ENCODE measurements at regions of chr7 and their contacts with region 1.

Region 1: GRCh38 chr7:100081535-100082102 is at the start of gene ZNF3:
- DNase-seq: peak; percentile 99
- H3K4me3 ChIP-seq: peak within 1 kb of the TSS; percentile 95 to 97
- H3K27ac ChIP-seq: peak within 1 kb of the TSS in 1 of 2 donors; percentile 71
- H3K4me1 ChIP-seq: peaks cover 17% of the 10 kb centered on the region
- H3K27me3 ChIP-seq: no peaks in the 10 kb centered on the region
- CTCF ChIP-seq: peak; percentile 93 to 98 (median 95)
- POLR2A ChIP-seq: no peak
- total RNA-seq, gene ZNF3: 24.7 to 27.7 TPM

Region 2: GRCh38 chr7:99558306-99559174 is 523.1 kb before region 1 on chr7 and contains the start of gene ZNF655:
- intact Hi-C with region 1: no loop called
- DNase-seq: peak; percentile 93
- H3K4me3 ChIP-seq: peak within 1 kb of the TSS; percentile 97 to 99
- H3K27ac ChIP-seq: peak within 1 kb of the TSS; percentile 96 to 98
- H3K4me1 ChIP-seq: peaks cover 16% of the 10 kb centered on the region
- H3K27me3 ChIP-seq: no peaks in the 10 kb centered on the region
- CTCF ChIP-seq: peak in 1 of 3 experiments; percentile 10
- POLR2A ChIP-seq: peak; percentile 14
- total RNA-seq, gene ZNF655: 120 to 149 TPM

Region 3: GRCh38 chr7:99997545-99998137 is 84.0 kb before region 1 on chr7:
- intact Hi-C with region 1: loop called (anchors 10 kb)
- DNase-seq: peak; percentile 64
- H3K4me3 ChIP-seq: peak overlapping the region; percentile 56 to 59
- H3K27ac ChIP-seq: peak overlapping the region; percentile 66 to 80
- H3K4me1 ChIP-seq: peaks cover 24% of the 10 kb centered on the region
- H3K27me3 ChIP-seq: no peaks in the 10 kb centered on the region
- CTCF ChIP-seq: peak in 2 of 3 experiments; percentile 26 to 28
- POLR2A ChIP-seq: no peak

Region 4: DNA sequence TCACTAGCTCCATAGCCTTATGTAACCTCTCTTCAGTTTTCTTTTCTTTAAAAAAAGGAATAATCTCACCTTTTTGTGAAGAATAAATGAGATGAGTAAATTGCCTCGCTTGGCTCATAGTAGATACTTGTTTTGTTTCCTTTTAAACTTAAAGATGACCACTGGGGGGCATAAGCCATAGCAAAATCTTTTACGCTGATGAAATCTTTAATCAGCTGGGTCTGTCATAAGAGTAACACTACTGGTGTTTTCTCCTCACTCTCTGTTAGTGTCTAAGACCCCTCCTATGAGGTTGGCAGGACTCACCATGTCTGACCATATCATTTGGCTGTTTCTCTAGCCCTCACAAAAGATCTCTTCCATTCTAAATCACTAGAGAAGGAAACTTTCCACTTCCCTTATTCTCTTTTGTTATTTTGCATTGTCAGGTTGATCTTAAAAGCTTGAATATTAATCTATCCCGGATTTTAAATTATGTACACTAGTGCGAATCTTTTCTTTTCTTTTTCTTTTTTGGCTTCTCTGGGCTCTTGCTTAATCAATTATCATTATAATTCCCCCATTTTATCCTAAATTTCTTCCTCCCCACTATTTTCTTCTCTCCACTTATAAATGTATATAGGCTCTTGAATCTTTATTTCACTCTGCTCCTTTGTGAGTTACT is 108.6 kb after region 1 on chr7:
- intact Hi-C with region 1: no loop called
- DNase-seq: no peak
- H3K4me3 ChIP-seq: no peak overlapping the region
- H3K27ac ChIP-seq: no peak overlapping the region
- H3K4me1 ChIP-seq: no peaks in the 10 kb centered on the region
- H3K27me3 ChIP-seq: no peaks in the 10 kb centered on the region
- CTCF ChIP-seq: peak in 2 of 3 experiments; percentile 23 to 53
- POLR2A ChIP-seq: no peak

Region 5: GRCh38 chr7:100271716-100272537 is 190.3 kb after region 1 on chr7:
- intact Hi-C with region 1: no loop called
- DNase-seq: peak; percentile 99
- H3K4me3 ChIP-seq: peak overlapping the region; percentile 70 to 72
- H3K27ac ChIP-seq: peak overlapping the region; percentile 55 to 75
- H3K4me1 ChIP-seq: peaks cover 4% of the 10 kb centered on the region
- H3K27me3 ChIP-seq: no peaks in the 10 kb centered on the region
- CTCF ChIP-seq: peak in 1 of 3 experiments; percentile 36
- POLR2A ChIP-seq: no peak